GM13976 (cell line): ENCODE measurements at regions of chr16 and their contacts with region 1.

Region 1: GRCh38 chr16:55701442-55702319 is 45.9 kb downstream of the SLC6A2 start:
- DNase-seq: peak; percentile 62
- CTCF ChIP-seq: peak; percentile 55

Region 2: GRCh38 chr16:55465077-55465896 is 236.4 kb before region 1 on chr16:
- in situ Hi-C with region 1: loop called (anchors 5 kb)
- DNase-seq: peak; percentile 80
- CTCF ChIP-seq: peak; percentile 99

Region 3: GRCh38 chr16:55842369-55843104 is 140.9 kb after region 1 on chr16:
- in situ Hi-C with region 1: loop called (anchors 10 kb)
- DNase-seq: peak; percentile 68
- CTCF ChIP-seq: peak; percentile 66